Activated naive CD4-positive, alpha-beta T cell treated with anti-CD3 and anti-CD28 coated beads for 36 hours (primary cell): ENCODE measurements at regions of chr5 and their contacts with region 1.

Region 1: DNA sequence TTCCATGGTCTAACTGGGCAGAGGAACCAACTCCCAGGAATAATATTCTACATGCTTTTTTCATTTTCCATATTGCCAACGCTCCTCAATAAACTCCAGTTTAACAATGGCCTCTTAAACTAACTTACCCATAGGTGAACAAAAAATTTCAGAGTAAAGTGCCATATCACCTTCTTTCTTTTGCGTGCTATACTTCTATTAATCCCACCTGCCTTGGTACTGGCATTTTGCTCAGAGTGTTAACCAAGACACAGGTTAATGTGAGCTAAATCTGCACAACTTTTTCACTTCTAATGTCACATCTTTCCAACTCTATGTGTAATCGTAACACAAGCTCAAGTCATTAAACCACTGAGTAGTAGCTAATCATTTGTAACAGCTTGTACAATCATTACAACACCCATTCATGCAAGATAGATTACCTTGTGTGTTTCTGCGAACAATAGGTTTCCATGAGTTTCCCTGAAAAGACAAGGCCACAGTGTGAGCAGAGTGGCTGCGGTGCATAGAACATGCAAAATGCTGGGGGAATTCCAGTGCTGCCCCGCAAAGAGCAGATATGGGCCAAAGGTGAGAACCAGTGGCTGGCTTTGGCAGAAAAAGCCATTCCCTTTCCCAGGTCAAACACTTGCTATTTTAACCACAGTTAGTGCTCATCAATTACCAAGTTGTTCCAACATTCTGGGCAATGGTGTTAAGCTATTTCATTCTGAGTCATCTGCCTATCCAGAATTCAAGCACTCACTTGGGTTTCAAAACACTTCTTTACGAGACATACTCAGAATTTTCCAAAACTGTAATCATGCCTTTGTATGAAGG is 42.8 kb downstream of the TIMD4 start:
- DNase-seq: peak; percentile 89
- H3K4me3 Mint-ChIP-seq: peak overlapping the region; percentile 55
- H3K27ac Mint-ChIP-seq: peak overlapping the region; percentile 93
- H3K4me1 Mint-ChIP-seq: peaks cover 70% of the 10 kb centered on the region
- H3K27me3 Mint-ChIP-seq: no peaks in the 10 kb centered on the region

Region 2: DNA sequence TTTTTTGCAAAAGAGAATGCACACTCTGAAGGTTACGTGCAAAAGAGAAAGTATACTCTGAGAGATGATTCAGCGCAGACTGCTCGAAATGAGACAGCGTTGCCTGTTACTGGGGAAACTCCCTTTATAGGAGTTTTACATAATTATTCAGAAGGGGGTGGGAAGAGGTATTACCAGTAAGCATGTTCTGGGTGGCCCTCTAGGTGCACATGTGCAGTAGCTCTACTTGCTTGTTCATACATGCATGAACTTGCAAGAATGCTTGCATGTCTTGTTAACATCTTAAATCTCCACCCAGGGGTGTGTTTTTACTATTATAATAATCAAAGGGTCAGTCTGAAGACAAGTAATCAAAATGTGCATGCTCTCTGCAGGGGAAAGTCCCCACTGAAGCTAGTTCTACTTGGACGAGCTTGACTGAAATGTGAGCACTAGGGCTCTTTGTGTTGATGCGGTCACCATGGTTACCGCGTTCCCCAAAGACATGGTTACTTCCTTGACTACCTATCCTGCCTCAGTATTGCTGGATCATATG is 517.8 kb before region 1 on chr5:
- CTCF ChIA-PET with region 1: no interaction called
- intact Hi-C with region 1: loop called (anchors 1 kb)
- DNase-seq: peak; percentile 78
- H3K4me3 Mint-ChIP-seq: no peak overlapping the region
- H3K27ac Mint-ChIP-seq: no peak overlapping the region
- H3K4me1 Mint-ChIP-seq: peaks cover 12% of the 10 kb centered on the region
- H3K27me3 Mint-ChIP-seq: peaks cover 8% of the 10 kb centered on the region

Region 3: GRCh38 chr5:156934450-156935211 is 14.4 kb after region 1 on chr5:
- CTCF ChIA-PET with region 1: interaction called, 41 read pairs
- intact Hi-C with region 1: loop called (anchors 1 kb)
- DNase-seq: peak; percentile 88
- H3K4me3 Mint-ChIP-seq: peak overlapping the region; percentile 22
- H3K27ac Mint-ChIP-seq: peak overlapping the region; percentile 92
- H3K4me1 Mint-ChIP-seq: peaks cover 47% of the 10 kb centered on the region
- H3K27me3 Mint-ChIP-seq: no peaks in the 10 kb centered on the region

Region 4: DNA sequence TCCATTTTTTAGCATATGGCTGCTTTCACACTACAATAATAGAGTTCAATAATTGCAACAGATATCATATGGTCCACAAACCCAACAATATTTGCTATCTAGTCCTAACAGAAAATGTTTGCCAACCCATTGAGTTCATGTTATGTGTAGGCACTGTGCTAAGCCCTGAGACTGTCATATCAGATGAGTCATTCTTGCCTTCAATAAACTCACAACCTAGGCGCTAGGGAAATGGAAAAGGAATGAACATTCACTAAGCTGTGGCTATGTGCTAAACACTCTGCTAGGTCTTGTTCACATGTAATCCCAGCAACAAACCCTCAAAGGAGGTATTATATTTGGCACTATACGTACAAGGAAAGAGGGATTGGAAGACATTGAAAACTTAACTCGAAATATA is 51.2 kb after region 1 on chr5:
- CTCF ChIA-PET with region 1: no interaction called
- intact Hi-C with region 1: no loop called
- DNase-seq: no peak
- H3K4me3 Mint-ChIP-seq: no peak overlapping the region
- H3K27ac Mint-ChIP-seq: no peak overlapping the region
- H3K4me1 Mint-ChIP-seq: peaks cover 5% of the 10 kb centered on the region
- H3K27me3 Mint-ChIP-seq: no peaks in the 10 kb centered on the region

Region 5: GRCh38 chr5:157108976-157109375 is 188.7 kb after region 1 on chr5 and contains the start of gene HAVCR2:
- CTCF ChIA-PET with region 1: no interaction called
- intact Hi-C with region 1: loop called (anchors 1 kb)
- DNase-seq: peak; percentile 87
- H3K4me3 Mint-ChIP-seq: peak within 1 kb of the TSS; percentile 65
- H3K27ac Mint-ChIP-seq: peak within 1 kb of the TSS; percentile 87
- H3K4me1 Mint-ChIP-seq: peaks cover 40% of the 10 kb centered on the region
- H3K27me3 Mint-ChIP-seq: no peaks in the 10 kb centered on the region
- total RNA-seq, gene HAVCR2: 10.2 to 10.4 TPM

Region 6: DNA sequence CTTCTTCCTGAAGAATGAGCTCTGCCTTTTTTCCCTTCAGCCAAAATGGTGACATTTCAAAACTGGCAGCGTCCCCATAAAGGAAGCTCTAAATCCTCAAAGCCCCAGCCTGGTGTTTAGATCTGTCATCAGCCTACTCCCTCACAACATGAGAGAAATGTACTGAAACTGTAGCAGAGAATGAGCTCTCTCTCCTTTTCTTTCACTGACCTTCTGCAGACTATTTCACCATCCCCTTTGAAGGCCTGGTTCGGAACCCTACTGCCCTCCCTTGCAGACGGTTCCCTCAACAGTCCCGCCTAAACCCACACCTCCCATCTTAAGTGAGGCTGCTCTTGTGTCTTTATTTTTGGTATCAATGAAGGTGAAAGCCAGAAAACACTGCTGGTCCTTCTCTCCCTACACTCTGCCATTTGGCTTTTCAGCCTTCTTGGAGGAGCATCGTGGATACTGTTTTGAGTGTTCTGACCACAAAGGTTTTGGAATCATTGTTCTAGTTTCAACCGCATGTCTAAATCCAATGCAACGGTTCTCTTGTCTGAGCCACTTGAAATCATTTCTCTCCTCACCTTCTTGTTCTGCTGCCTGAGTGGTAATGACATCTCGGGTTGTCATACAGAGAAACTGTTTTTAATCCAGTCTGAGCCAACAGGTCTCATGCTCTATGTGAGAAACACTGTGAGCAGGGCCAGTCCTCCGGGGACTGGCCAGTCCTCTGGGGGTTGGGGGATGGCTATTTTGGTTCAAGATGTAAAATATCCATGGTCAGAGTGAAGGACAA is 299.4 kb after region 1 on chr5:
- CTCF ChIA-PET with region 1: no interaction called
- intact Hi-C with region 1: loop called (anchors 1 kb)
- DNase-seq: peak; percentile 65
- H3K4me3 Mint-ChIP-seq: peak overlapping the region; percentile 45
- H3K27ac Mint-ChIP-seq: peak overlapping the region; percentile 97
- H3K4me1 Mint-ChIP-seq: peaks cover 81% of the 10 kb centered on the region
- H3K27me3 Mint-ChIP-seq: no peaks in the 10 kb centered on the region

Region 7: DNA sequence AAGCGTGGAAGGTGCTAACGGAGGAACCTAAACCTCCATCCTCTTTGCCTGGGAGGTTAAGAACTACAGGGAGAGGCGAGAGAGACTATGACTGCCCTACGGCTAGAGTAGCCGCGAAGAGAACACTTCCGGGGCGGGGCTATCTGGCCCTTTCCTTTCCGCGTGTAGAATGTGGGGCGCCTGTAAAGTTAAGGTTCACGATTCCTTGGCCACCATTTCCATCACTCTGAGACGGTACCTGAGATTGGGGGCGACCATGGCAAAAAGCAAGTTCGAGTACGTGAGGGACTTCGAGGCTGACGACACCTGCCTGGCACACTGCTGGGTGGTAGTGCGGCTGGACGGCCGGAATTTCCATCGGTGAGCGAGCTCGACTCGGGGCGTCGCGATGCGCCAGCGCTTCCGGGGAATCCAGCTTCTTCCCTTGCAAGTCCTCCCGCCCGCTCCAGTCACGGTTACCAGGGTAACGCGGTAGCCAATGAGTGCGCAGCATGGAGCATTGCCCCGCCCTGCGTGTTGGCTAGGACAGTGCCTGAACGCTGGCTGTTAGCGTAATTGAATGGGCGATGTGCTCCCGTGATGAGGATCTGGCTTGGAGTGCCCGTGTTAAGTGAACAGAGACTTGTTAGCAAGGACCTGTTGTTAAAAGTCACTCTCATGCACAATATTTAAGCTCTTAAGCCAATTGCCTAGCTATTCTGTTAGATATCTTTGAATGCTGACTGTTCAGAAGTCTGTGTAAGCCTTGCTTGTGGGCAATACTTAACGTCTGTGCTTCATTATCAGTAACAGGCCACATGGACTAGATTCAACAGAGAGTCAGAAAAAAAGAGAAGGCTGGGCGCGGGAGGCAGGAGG is 811.2 kb after region 1 on chr5 and contains the start of gene THG1L:
- CTCF ChIA-PET with region 1: no interaction called
- intact Hi-C with region 1: loop called (anchors 1 kb)
- DNase-seq: peak; percentile 100
- H3K4me3 Mint-ChIP-seq: peak within 1 kb of the TSS; percentile 97
- H3K27ac Mint-ChIP-seq: peak within 1 kb of the TSS; percentile 95
- H3K4me1 Mint-ChIP-seq: peaks cover 25% of the 10 kb centered on the region
- H3K27me3 Mint-ChIP-seq: no peaks in the 10 kb centered on the region
- total RNA-seq, gene THG1L: 28.1 to 30.2 TPM